ENCODE measurements at regions of chr19 and their contacts with region 1.

Region 1: GRCh38 chr19:53553884-53554791 is 16.2 kb downstream of the ZNF331 start:
- DNase-seq: peak; percentile 96
- ATAC-seq: peak; percentile 92
- H3K4me3 Mint-ChIP-seq: peak overlapping the region; percentile 92
- H3K27ac Mint-ChIP-seq: peak overlapping the region; percentile 99
- H3K4me1 Mint-ChIP-seq: peaks cover 31% of the 10 kb centered on the region
- H3K27me3 Mint-ChIP-seq: no peaks in the 10 kb centered on the region

Region 2: DNA sequence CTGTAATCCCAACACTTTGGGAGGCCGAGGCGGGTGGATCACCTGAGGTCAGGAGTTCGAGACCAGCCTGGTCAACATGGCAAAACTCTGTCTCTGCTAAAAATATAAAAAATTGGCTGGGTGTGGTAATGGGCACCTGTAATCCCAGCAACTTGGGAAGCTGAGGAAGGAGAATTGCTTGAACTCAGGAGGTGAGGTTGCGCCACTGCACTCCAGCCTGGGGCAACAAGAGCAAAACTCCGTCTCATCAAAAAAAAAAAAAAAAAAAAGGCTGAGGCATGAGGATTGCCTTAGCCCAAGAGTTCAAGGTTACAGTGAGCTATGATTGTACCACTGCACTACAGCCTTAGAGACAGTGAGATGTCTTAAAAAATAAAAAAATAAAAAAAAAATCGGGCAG is 482.8 kb before region 1 on chr19:
- CTCF ChIA-PET with region 1: no interaction called
- POLR2A ChIA-PET with region 1: no interaction called
- intact Hi-C with region 1: no loop called
- DNase-seq: no peak
- ATAC-seq: no peak
- H3K4me3 Mint-ChIP-seq: no peak overlapping the region
- H3K27ac Mint-ChIP-seq: no peak overlapping the region
- H3K4me1 Mint-ChIP-seq: no peaks in the 10 kb centered on the region
- H3K27me3 Mint-ChIP-seq: no peaks in the 10 kb centered on the region

Region 3: DNA sequence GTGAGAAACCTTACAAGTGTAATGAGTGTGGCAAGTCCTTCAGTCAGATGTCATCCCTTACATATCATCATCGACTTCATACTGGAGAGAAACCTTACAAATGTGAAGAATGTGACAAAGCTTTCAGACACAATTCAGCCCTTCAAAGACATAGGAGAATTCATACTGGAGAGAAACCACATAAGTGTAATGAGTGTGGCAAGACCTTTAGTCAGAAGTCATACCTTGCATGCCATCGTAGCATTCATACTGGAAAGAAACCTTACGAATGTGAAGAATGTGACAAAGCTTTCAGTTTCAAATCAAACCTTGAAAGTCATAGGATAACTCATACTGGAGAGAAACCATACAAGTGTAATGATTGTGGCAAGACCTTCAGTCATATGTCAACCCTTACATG is 172.8 kb before region 1 on chr19:
- CTCF ChIA-PET with region 1: no interaction called
- POLR2A ChIA-PET with region 1: no interaction called
- intact Hi-C with region 1: no loop called
- DNase-seq: no peak
- ATAC-seq: peak; percentile 9
- H3K4me3 Mint-ChIP-seq: no peak overlapping the region
- H3K27ac Mint-ChIP-seq: no peak overlapping the region
- H3K4me1 Mint-ChIP-seq: no peaks in the 10 kb centered on the region
- H3K27me3 Mint-ChIP-seq: no peaks in the 10 kb centered on the region

Region 4: DNA sequence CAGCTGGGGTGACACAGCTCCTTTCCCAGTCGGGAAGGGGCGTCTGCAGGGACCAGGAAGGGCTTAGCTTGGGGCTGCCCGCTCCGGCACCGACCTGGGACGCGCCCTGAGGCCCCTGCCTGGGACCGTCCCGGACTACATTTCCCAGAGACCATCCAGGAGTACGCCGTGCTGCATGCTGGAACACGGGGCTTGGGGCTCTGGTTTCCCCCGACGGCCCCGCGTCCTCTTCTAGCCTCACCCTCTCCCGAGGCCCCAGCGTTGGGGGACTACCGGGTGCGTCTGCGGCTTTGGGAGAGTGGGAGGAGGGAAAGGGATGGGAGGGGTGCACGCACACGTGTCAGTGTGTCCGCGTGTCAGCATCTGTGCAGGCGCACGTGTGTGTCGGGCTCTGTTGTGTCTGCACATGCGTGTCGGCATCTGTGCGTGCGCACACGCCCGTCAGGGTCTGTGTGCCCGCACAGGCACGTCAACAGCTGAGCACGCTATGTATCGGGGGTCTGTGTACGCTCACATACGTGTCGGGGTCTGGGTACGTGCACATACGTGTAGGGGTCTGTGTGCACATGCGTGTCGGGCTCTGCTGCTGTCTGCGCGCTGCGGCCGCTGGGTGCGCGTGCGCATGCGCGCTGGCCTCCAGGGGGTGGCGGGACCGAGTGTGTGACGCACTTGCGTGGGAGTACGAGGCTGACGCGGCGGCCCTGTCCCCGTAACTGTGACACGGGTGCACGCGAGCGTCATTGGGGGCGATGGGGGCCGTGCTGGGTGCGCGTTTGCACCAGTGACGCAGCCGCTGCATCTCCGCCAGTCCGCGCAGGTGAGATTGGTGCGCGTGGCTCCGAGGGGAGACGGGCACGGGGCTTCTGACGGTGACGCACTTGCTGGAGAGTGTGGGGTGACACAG is 16.4 kb before region 1 on chr19 and contains the start of gene ZNF331:
- CTCF ChIA-PET with region 1: no interaction called
- POLR2A ChIA-PET with region 1: interaction called, 3 read pairs
- intact Hi-C with region 1: loop called (anchors 1 kb)
- DNase-seq: peak; percentile 93
- ATAC-seq: peak; percentile 77
- H3K4me3 Mint-ChIP-seq: peak within 1 kb of the TSS; percentile 95
- H3K27ac Mint-ChIP-seq: peak within 1 kb of the TSS; percentile 98
- H3K4me1 Mint-ChIP-seq: peaks cover 33% of the 10 kb centered on the region
- H3K27me3 Mint-ChIP-seq: no peaks in the 10 kb centered on the region
- total RNA-seq, gene ZNF331: 24.3 to 29.7 TPM

Region 5: GRCh38 chr19:53659292-53659691 is 105.2 kb after region 1 on chr19:
- CTCF ChIA-PET with region 1: no interaction called
- POLR2A ChIA-PET with region 1: no interaction called
- intact Hi-C with region 1: no loop called
- DNase-seq: peak; percentile 14
- ATAC-seq: no peak
- H3K4me3 Mint-ChIP-seq: no peak overlapping the region
- H3K27ac Mint-ChIP-seq: no peak overlapping the region
- H3K4me1 Mint-ChIP-seq: no peaks in the 10 kb centered on the region
- H3K27me3 Mint-ChIP-seq: no peaks in the 10 kb centered on the region

Region 6: DNA sequence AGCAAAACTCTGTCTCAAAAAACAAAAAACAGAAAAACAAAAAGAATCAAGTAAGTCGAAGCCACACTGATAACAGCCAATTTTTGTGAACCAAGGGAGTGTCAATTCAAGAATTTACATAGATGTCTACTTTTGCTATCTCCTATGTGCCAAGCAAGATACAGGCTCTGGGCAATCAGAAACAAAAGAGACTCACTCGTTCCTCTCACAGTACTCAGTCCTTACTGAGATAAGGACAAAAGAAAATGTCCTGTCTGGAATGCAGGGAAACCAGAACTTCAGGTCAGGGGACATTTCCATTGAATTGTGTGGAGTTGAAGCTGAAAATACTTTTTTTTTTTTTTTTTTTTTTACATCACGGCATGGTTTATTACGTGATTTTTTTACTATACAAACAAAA is 217.0 kb after region 1 on chr19:
- CTCF ChIA-PET with region 1: no interaction called
- POLR2A ChIA-PET with region 1: no interaction called
- intact Hi-C with region 1: no loop called
- DNase-seq: no peak
- ATAC-seq: no peak
- H3K4me3 Mint-ChIP-seq: no peak overlapping the region
- H3K27ac Mint-ChIP-seq: no peak overlapping the region
- H3K4me1 Mint-ChIP-seq: no peaks in the 10 kb centered on the region
- H3K27me3 Mint-ChIP-seq: peaks cover 4% of the 10 kb centered on the region

Measured in activated CD4-positive, alpha-beta T cell treated with anti-CD3 and anti-CD28 coated beads for 36 hours (primary cell).